ENCODE measurements at regions of chr1 and their contacts with region 1.

Region 1: GRCh38 chr1:152047730-152048402 is 11.1 kb upstream of the S100A11 start:
- DNase-seq: peak; percentile 57 to 82 (median 76)
- ATAC-seq: peak; percentile 93
- H3K4me3 ChIP-seq: peak overlapping the region; percentile 10
- H3K4me3 Mint-ChIP-seq: peak overlapping the region; percentile 56 to 87 (median 77)
- H3K27ac ChIP-seq: peak overlapping the region; percentile 81
- H3K27ac Mint-ChIP-seq: peak overlapping the region; percentile 92 to 98 (median 98)
- H3K4me1 ChIP-seq: peaks cover 19 to 21% of the 10 kb centered on the region in 2 donors
- H3K4me1 Mint-ChIP-seq: peaks cover 21 to 53% (median 30%) of the 10 kb centered on the region in 7 donors
- H3K27me3 ChIP-seq: no peaks in the 10 kb centered on the region
- H3K27me3 Mint-ChIP-seq: peaks cover 0 to 3% (median 0%) of the 10 kb centered on the region in 5 donors

Region 2: GRCh38 chr1:152110860-152111514 is 63.1 kb after region 1 on chr1:
- CTCF ChIA-PET with region 1: no interaction called
- POLR2A ChIA-PET with region 1: no interaction called
- intact Hi-C with region 1: loop called in 1 of 2 experiments (anchors 5 kb)
- DNase-seq: peak in 3 of 9 donors; percentile 10 to 42 (median 25)
- ATAC-seq: peak; percentile 52
- H3K4me3 ChIP-seq: peak overlapping the region; percentile 63
- H3K4me3 Mint-ChIP-seq: no peak overlapping the region
- H3K27ac ChIP-seq: no peak overlapping the region
- H3K27ac Mint-ChIP-seq: no peak overlapping the region
- H3K4me1 ChIP-seq: peaks cover 23 to 28% of the 10 kb centered on the region in 2 donors
- H3K4me1 Mint-ChIP-seq: peaks cover 0 to 12% (median 0%) of the 10 kb centered on the region in 7 donors
- H3K27me3 ChIP-seq: peaks cover 4 to 55% of the 10 kb centered on the region in 2 donors
- H3K27me3 Mint-ChIP-seq: peaks cover 3 to 28% (median 5%) of the 10 kb centered on the region in 5 donors

Region 3: DNA sequence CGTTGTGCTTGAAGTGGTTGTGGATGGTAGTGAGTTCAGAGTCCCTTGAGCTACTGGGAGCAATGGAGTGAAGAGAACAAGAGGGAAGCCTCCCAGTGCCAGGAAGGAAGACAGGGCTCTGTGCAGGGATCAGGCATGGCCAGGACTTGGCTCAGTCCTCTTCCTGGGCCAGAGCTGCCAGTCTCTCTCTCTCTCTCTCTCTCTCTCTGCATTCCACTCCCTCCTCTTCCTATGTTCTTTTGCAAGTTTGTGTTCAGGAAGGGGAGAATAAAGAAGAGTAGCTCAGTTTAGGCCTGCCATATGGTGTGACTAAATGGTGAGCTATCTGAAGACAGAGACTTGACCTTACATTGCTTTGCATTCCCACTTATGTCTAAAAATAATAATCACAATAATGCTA is 131.7 kb after region 1 on chr1:
- CTCF ChIA-PET with region 1: interaction called, 97 read pairs
- POLR2A ChIA-PET with region 1: no interaction called
- intact Hi-C with region 1: no loop called
- DNase-seq: no peak
- ATAC-seq: no peak
- H3K4me3 ChIP-seq: no peak overlapping the region
- H3K4me3 Mint-ChIP-seq: no peak overlapping the region
- H3K27ac ChIP-seq: no peak overlapping the region
- H3K27ac Mint-ChIP-seq: no peak overlapping the region
- H3K4me1 ChIP-seq: no peaks in the 10 kb centered on the region
- H3K4me1 Mint-ChIP-seq: peaks cover 0 to 1% (median 0%) of the 10 kb centered on the region in 7 donors
- H3K27me3 ChIP-seq: no peaks in the 10 kb centered on the region
- H3K27me3 Mint-ChIP-seq: peaks cover 9 to 26% (median 21%) of the 10 kb centered on the region in 5 donors

Region 4: DNA sequence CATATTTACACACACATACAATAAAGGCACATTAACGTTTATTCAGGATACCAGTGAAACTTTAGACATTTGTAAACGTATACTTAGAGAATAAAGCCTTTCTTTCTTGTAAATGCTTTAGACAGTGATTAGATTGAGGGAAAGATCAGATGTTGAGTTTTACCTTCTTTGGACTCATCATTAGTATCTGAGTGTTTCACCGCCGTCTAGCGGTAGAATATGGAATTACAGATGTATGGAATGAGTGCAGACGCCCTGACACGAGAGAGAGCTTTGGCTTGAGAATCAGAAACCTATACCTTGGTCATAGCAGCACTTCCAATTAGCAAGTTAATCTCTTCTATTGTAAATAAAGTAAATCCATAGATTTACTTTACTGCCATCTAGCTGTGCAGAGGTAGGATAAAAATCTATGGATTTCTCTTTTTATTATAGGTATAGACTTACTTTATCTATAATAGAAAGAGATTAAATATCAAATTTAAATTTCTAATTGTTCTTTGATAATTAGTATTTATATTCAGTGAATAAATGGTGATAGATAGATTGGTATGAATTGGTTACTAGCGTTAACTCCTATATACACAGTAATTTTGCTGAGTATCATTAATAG is 299.4 kb after region 1 on chr1:
- CTCF ChIA-PET with region 1: interaction called, 4 read pairs
- POLR2A ChIA-PET with region 1: no interaction called
- intact Hi-C with region 1: loop called (anchors 1 kb)
- DNase-seq: peak in 6 of 9 donors; percentile 20 to 59 (median 48)
- ATAC-seq: peak; percentile 57
- H3K4me3 ChIP-seq: no peak overlapping the region
- H3K4me3 Mint-ChIP-seq: no peak overlapping the region
- H3K27ac ChIP-seq: no peak overlapping the region
- H3K27ac Mint-ChIP-seq: no peak overlapping the region
- H3K4me1 ChIP-seq: no peaks in the 10 kb centered on the region
- H3K4me1 Mint-ChIP-seq: no peaks in the 10 kb centered on the region
- H3K27me3 ChIP-seq: peaks cover 0 to 6% of the 10 kb centered on the region in 2 donors
- H3K27me3 Mint-ChIP-seq: peaks cover 19 to 35% (median 22%) of the 10 kb centered on the region in 5 donors

Region 5: DNA sequence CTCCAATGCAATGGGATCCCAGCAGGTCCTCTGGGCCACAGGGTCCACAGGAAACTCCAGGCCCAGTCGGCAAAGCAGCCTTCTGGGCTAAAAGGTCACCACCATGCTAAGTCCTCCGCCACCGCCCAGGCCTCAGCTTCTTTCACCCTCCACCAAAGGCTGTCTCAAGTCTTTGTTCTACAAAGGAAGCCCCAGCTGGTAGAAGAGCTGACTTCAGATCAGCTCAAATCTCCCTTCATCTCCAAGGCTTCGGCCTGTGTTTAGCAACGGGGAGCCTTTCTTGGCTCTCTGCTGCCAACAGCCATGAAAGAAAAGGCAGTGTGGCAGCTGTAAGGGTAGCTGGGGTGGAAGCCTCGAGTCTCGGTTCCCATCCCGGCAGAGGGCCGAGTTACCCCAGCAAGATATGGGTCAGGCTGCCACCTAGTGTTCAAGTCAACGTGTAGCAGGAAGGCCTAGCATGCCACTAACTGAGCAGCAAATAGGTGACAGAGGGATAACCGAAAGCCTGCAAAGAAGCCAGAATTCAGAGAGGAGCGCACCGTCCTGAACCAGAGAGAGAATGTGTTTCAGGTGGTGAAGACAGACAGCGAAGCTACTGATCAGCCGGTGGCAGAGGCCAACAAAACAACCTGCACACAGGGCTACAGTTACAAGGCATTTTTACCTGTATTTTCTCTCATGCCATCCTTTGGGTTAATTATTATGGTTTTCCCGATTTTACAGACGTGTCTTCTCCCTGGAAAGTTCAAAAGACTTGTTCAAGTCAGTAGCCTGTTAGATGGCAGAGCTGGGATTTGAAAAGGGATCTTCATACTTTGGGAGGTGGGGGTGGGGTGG is 393.0 kb after region 1 on chr1:
- CTCF ChIA-PET with region 1: no interaction called
- POLR2A ChIA-PET with region 1: no interaction called
- intact Hi-C with region 1: loop called (anchors 1 kb)
- DNase-seq: peak; percentile 32 to 72 (median 59)
- ATAC-seq: peak; percentile 96
- H3K4me3 ChIP-seq: no peak overlapping the region
- H3K4me3 Mint-ChIP-seq: no peak overlapping the region
- H3K27ac ChIP-seq: no peak overlapping the region
- H3K27ac Mint-ChIP-seq: peak overlapping the region in 4 of 9 donors; percentile 42 to 72 (median 46)
- H3K4me1 ChIP-seq: no peaks in the 10 kb centered on the region
- H3K4me1 Mint-ChIP-seq: peaks cover 0 to 8% (median 0%) of the 10 kb centered on the region in 7 donors
- H3K27me3 ChIP-seq: no peaks in the 10 kb centered on the region
- H3K27me3 Mint-ChIP-seq: peaks cover 15 to 30% (median 23%) of the 10 kb centered on the region in 5 donors

Region 6: GRCh38 chr1:152577168-152577567 is 529.3 kb after region 1 on chr1:
- CTCF ChIA-PET with region 1: no interaction called
- POLR2A ChIA-PET with region 1: no interaction called
- intact Hi-C with region 1: no loop called
- DNase-seq: no peak
- ATAC-seq: no peak
- H3K4me3 ChIP-seq: no peak overlapping the region
- H3K4me3 Mint-ChIP-seq: no peak overlapping the region
- H3K27ac ChIP-seq: no peak overlapping the region
- H3K27ac Mint-ChIP-seq: no peak overlapping the region
- H3K4me1 ChIP-seq: no peaks in the 10 kb centered on the region
- H3K4me1 Mint-ChIP-seq: peaks cover 0 to 5% (median 0%) of the 10 kb centered on the region in 7 donors
- H3K27me3 ChIP-seq: peaks cover 0 to 3% of the 10 kb centered on the region in 2 donors
- H3K27me3 Mint-ChIP-seq: peaks cover 11 to 47% (median 39%) of the 10 kb centered on the region in 5 donors